Lower leg skin (tissue), 4 donors: ENCODE measurements at regions of chr5 and their contacts with region 1.

Region 1: GRCh38 chr5:151267171-151267885 is 14.3 kb downstream of the GM2A start:
- DNase-seq: peak in 1 of 2 donors; percentile 29
- H3K4me3 ChIP-seq: no peak overlapping the region
- CTCF ChIP-seq: no peak
- POLR2A ChIP-seq: no peak

Region 2: DNA sequence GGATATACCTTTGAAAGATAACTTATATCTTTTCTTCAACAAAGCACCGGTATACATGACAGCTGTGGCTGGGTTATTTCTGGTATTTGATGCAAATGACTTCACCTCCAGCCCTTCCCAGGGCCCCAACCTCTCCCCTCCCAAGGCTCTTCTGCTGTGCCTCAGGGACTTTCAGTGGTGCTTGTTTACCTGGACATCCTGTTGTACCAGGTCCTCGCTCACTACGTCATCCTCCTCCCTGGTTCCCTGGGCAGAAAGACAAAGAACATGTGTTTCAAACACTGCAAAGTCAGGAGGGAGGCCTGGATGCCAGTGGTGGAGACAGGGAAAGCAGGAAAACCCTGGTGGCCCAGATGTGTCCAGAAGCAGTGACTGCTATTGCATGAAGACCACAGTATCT is 133.1 kb before region 1 on chr5:
- intact Hi-C with region 1: no loop called
- DNase-seq: no peak
- H3K4me3 ChIP-seq: no peak overlapping the region
- CTCF ChIP-seq: no peak
- POLR2A ChIP-seq: no peak

Region 3: GRCh38 chr5:151245680-151246219 is 21.6 kb before region 1 on chr5:
- intact Hi-C with region 1: loop called (anchors 1 kb)
- DNase-seq: no peak
- H3K4me3 ChIP-seq: no peak overlapping the region
- CTCF ChIP-seq: no peak
- POLR2A ChIP-seq: no peak